ENCODE measurements at regions of chr16 and their contacts with region 1.

Region 1: DNA sequence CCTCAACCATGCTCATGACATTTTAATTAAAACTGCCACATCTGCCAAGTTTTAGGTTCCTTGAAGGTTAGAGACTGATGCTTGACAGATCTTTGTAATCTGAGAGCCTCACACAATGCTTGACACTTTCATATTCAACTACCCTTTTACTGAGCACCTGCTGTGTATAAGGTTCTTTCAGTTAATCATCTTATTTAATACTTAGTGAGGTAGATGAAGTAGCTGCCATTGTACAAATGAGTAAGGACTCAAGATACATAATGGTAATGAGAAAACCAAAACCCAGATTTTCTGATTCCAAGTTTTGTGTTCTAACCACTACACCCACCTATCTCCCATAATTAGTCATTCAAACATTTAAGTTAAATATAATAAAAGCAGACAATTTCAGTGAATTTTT is 35.4 kb upstream of the ARL6IP1 start:
- DNase-seq: no peak
- H3K4me3 Mint-ChIP-seq: no peak overlapping the region
- H3K27ac Mint-ChIP-seq: peak overlapping the region; percentile 91
- H3K4me1 Mint-ChIP-seq: peaks cover 19% of the 10 kb centered on the region
- H3K27me3 Mint-ChIP-seq: no peaks in the 10 kb centered on the region

Region 2: GRCh38 chr16:18789850-18790724 is 46.6 kb before region 1 on chr16 and contains the start of gene RPS15A:
- intact Hi-C with region 1: loop called (anchors 1 kb)
- DNase-seq: peak; percentile 92
- H3K4me3 Mint-ChIP-seq: peak within 1 kb of the TSS; percentile 95
- H3K27ac Mint-ChIP-seq: peak within 1 kb of the TSS; percentile 85
- H3K4me1 Mint-ChIP-seq: peaks cover 64% of the 10 kb centered on the region
- H3K27me3 Mint-ChIP-seq: peaks cover 1% of the 10 kb centered on the region
- total RNA-seq, gene RPS15A: 1,849 and 1,857 TPM in 2 replicates

Region 3: DNA sequence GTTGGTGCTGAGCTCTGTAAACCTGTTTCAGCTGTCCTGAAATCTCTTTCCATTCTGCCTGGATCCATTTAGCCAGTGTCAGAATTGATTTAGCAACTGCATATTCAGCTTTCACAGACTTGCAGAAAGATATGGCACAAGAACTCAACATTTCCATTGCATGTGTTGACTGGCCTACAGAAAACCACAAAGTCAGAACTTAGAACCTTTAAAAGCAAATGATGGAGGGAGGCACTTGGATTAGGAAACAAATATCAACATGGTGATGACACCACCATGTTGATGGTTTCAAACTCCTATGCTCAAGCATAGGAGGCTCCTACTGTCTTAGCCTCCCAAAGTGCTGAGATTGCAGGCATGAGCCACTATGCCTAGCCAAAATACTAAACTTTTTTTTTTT is 17.0 kb after region 1 on chr16:
- intact Hi-C with region 1: loop called (anchors 2 kb)
- DNase-seq: no peak
- H3K4me3 Mint-ChIP-seq: no peak overlapping the region
- H3K27ac Mint-ChIP-seq: peak overlapping the region; percentile 42
- H3K4me1 Mint-ChIP-seq: peaks cover 11% of the 10 kb centered on the region
- H3K27me3 Mint-ChIP-seq: no peaks in the 10 kb centered on the region

Region 4: GRCh38 chr16:19166511-19166910 is 329.8 kb after region 1 on chr16:
- intact Hi-C with region 1: no loop called
- DNase-seq: no peak
- H3K4me3 Mint-ChIP-seq: no peak overlapping the region
- H3K27ac Mint-ChIP-seq: no peak overlapping the region
- H3K4me1 Mint-ChIP-seq: no peaks in the 10 kb centered on the region
- H3K27me3 Mint-ChIP-seq: peaks cover 39% of the 10 kb centered on the region

Measured in activated T-helper 1 cell treated with anti-CD3 and anti-CD28 coated beads, Interleukin-12 subunit alpha, Interleukin-12 subunit beta, Interleukin-2, Interleukin-4 antibody, amounts not matched to agents 30 ng/mL and 10 ng/mL and 1 ng/mL, durations not matched to agents 14 hours and 24 hours and 36 hours (primary cell).